ENCODE measurements at regions of chr10 and their contacts with region 1.

Region 1: DNA sequence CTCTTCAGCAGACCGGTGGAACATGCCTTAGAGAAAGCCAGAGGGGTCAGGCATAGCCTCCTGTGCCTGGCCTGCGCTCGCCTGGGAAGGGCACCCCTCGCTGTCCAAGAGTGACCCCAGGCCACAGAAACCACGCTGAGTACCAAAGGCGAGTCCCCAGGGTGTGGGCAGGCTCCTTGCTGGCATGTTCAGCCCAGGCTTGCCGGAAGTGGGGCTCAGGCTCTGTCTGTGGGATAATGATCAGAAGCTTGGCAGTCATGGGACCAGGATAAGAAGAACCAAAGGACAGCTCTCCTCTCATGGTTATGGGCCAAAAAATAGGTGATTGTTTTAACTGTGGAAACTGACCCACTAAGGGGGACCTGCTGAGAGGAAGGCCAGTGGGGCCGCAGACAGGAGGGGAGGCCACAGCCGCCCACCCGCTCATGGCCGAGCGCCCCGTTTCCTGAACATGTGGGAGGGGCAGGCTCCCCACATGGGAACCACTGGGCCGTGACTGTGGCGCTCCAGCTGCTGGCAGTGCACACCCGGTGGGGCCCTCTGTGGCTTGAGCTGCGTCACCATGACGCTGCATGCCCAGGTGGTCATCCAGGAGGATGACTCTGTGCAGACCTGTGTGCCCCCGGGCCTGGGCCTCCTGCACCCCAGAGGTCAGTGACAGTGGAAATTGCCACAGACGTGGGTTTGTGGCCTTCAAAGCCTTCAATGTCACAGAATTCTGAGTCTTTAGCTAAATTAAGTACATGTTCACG is 84.9 kb downstream of the MGMT start:
- DNase-seq: no peak
- H3K4me3 ChIP-seq: no peak overlapping the region
- H3K27ac ChIP-seq: no peak overlapping the region
- H3K4me1 ChIP-seq: no peaks in the 10 kb centered on the region
- H3K27me3 ChIP-seq: no peaks in the 10 kb centered on the region
- CTCF ChIP-seq: no peak

Region 2: GRCh38 chr10:129466703-129467358 is 85.1 kb before region 1 on chr10 and contains the start of gene MGMT:
- CTCF ChIA-PET with region 1: no interaction called
- dilution Hi-C with region 1: loop called (anchors 5 kb)
- in situ Hi-C with region 1: no loop called
- intact Hi-C with region 1: no loop called
- DNase-seq: peak; percentile 73
- H3K4me3 ChIP-seq: peak within 1 kb of the TSS; percentile 79 to 88 (median 82)
- H3K27ac ChIP-seq: peak within 1 kb of the TSS; percentile 20
- H3K4me1 ChIP-seq: peaks cover 6% of the 10 kb centered on the region
- H3K27me3 ChIP-seq: no peaks in the 10 kb centered on the region
- CTCF ChIP-seq: no peak
- total RNA-seq, gene MGMT: 11.2 to 22.2 TPM

Region 3: GRCh38 chr10:129505500-129506075 is 46.4 kb before region 1 on chr10:
- CTCF ChIA-PET with region 1: no interaction called
- dilution Hi-C with region 1: no loop called
- in situ Hi-C with region 1: no loop called
- intact Hi-C with region 1: loop called (anchors 1 kb)
- DNase-seq: peak; percentile 73
- H3K4me3 ChIP-seq: no peak overlapping the region
- H3K27ac ChIP-seq: no peak overlapping the region
- H3K4me1 ChIP-seq: no peaks in the 10 kb centered on the region
- H3K27me3 ChIP-seq: no peaks in the 10 kb centered on the region
- CTCF ChIP-seq: no peak